SK-MEL-5 (cell line): ENCODE measurements at regions of chr1 and their contacts with region 1.

Region 1: DNA sequence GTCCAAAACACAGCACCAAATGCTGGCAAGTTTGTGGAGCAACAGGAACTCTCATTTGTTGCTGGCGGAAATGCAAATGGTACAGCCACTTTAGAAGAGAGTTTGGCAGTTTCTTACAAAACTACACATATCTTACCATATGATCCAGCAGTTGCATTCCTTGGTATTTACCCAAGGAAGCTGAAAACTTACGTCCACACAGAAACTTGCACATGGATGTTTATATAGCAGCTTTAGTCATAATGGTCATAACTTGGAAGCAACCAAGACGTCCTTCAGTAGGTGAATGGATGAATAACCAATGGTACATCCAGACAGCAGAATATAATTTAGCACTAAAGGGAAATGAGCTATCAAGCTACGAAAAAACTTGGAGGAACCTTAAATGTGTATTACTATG is 66.4 kb downstream of the MARK1 start:
- DNase-seq: no peak

Region 2: DNA sequence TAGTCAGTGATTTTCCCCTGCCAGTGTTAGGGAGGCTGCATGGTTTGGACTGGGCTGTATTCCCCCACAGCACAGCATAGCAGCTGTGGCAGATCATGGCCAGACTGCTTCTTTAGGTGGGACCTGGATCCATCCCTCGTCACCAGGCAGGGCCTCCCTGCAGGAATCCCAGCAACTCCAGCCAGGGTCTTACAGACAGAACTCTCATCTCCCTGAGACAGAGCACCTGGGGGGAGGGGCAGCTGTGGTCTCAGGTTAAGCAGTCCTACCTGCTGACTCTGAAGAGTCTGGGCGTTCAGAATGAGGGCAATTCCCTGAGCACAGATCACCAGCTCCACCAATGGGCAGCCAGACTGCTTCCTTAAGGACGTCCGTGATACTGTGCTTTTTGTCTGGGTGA is 47.9 kb after region 1 on chr1:
- in situ Hi-C with region 1: no loop called
- DNase-seq: no peak

Region 3: DNA sequence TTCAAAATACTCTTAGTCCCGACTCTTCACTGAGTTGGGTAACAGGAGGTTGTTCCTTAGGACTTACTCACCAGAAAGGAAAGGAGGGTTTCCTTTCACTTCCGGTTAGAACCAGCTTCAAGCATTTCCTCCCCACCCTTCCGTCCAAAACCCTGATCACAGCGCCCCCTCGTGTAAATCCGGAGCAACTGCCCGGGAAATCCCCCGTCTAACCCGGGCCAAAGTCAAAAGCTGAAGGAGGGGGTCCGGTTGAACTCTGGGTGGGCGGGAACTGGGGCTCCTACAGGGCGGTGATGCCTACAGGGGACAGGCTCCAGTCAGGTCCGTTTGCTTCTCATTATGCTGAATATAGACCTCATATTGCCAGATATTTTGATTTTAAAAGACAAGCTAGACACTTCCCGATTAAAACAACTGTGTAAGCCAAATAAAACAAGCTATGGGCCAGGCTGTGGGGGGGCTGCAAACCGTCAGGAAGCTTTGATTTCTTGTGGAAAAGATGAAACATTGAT is 138.8 kb after region 1 on chr1:
- in situ Hi-C with region 1: loop called (anchors 25 kb)
- DNase-seq: peak; percentile 84